ENCODE measurements at regions of chr7 and their contacts with region 1.

Region 1: DNA sequence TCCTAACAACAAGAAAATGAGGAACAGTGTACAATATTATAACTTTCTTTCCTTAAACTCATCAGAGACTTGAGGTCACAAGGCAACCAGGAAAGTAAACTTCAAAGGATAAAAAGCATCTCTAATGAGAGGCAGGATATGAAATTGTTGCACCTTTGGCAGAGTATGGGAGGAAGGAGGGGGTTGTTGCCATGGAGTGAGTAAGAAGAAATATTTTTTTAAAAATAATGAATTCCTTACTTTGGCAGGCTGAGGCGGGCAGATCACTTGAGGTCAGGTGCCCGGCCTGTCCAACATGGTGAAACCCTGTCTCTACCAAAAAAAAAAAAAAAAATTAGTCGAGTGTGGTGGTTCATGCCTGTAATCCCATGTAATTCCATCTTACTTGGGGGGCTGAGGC is 21.1 kb upstream of the CHN2 start:
- DNase-seq: no peak
- ATAC-seq: no peak
- H3K4me3 ChIP-seq: no peak overlapping the region
- H3K27ac ChIP-seq: no peak overlapping the region
- H3K4me1 ChIP-seq: no peaks in the 10 kb centered on the region
- H3K27me3 ChIP-seq: no peaks in the 10 kb centered on the region
- CTCF ChIP-seq: no peak

Region 2: GRCh38 chr7:28400838-28401360 is 772.6 kb before region 1 on chr7:
- CTCF ChIA-PET with region 1: no interaction called
- POLR2A ChIA-PET with region 1: interaction called, 11 read pairs
- intact Hi-C with region 1: no loop called
- DNase-seq: no peak
- ATAC-seq: no peak
- H3K4me3 ChIP-seq: no peak overlapping the region
- H3K27ac ChIP-seq: no peak overlapping the region
- H3K4me1 ChIP-seq: peaks cover 2% of the 10 kb centered on the region; the same call in 1 of the 2 replicates
- H3K27me3 ChIP-seq: no peaks in the 10 kb centered on the region
- CTCF ChIP-seq: no peak

Region 3: GRCh38 chr7:28865601-28866144 is 307.8 kb before region 1 on chr7:
- CTCF ChIA-PET with region 1: no interaction called
- POLR2A ChIA-PET with region 1: no interaction called
- intact Hi-C with region 1: no loop called
- DNase-seq: peak; percentile 68
- ATAC-seq: peak; percentile 81
- H3K4me3 ChIP-seq: 0 out of 2 replicates have a peak overlapping the region, but pooled peaks have one; percentile 5
- H3K27ac ChIP-seq: peak overlapping the region; percentile 41
- H3K4me1 ChIP-seq: peaks cover 19% of the 10 kb centered on the region
- H3K27me3 ChIP-seq: no peaks in the 10 kb centered on the region
- CTCF ChIP-seq: no peak

Region 4: GRCh38 chr7:29113384-29114103 is 59.9 kb before region 1 on chr7:
- CTCF ChIA-PET with region 1: no interaction called
- POLR2A ChIA-PET with region 1: no interaction called
- intact Hi-C with region 1: no loop called
- DNase-seq: peak; percentile 89
- ATAC-seq: peak; percentile 90
- H3K4me3 ChIP-seq: peak overlapping the region; percentile 1; the same call in 1 of the 2 replicates
- H3K27ac ChIP-seq: peak overlapping the region; percentile 76
- H3K4me1 ChIP-seq: peaks cover 51% of the 10 kb centered on the region
- H3K27me3 ChIP-seq: no peaks in the 10 kb centered on the region
- CTCF ChIP-seq: peak; percentile 74

Measured in PC-3 (cell line).